ENCODE measurements at regions of chr9 and their contacts with region 1.

Region 1: GRCh38 chr9:124239249-124240073 is 18.3 kb upstream of the NEK6 start:
- DNase-seq: peak; percentile 32
- H3K4me3 ChIP-seq: no peak overlapping the region
- H3K27ac ChIP-seq: no peak overlapping the region
- H3K4me1 ChIP-seq: peaks cover 3% of the 10 kb centered on the region
- H3K27me3 ChIP-seq: no peaks in the 10 kb centered on the region
- CTCF ChIP-seq: no peak
- POLR2A ChIP-seq: no peak

Region 2: GRCh38 chr9:124110307-124110915 is 129.1 kb before region 1 on chr9:
- intact Hi-C with region 1: loop called (anchors 10 kb)
- DNase-seq: peak; percentile 83
- H3K4me3 ChIP-seq: no peak overlapping the region
- H3K27ac ChIP-seq: no peak overlapping the region
- H3K4me1 ChIP-seq: no peaks in the 10 kb centered on the region
- H3K27me3 ChIP-seq: no peaks in the 10 kb centered on the region
- CTCF ChIP-seq: no peak
- POLR2A ChIP-seq: no peak

Region 3: DNA sequence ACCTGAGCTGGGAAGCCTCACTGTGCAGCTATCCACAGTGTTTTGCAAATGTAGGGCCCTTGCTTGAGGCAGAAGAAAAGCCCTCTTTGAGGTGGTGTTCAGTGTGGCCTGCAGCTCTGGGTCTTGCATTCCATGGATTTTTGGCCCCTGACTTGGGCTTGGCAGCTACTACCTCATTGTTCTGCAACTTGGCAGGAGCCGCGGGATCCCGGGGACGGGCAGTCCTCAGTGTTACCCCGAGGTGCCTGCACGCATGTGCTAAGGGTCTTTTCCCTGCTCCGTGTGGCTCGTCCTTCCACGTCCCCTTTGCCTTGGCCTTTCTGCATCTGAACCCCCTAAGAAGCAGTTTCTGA is 58.1 kb after region 1 on chr9:
- intact Hi-C with region 1: no loop called
- DNase-seq: peak; percentile 85
- H3K4me3 ChIP-seq: no peak overlapping the region
- H3K27ac ChIP-seq: no peak overlapping the region
- H3K4me1 ChIP-seq: peaks cover 36% of the 10 kb centered on the region
- H3K27me3 ChIP-seq: no peaks in the 10 kb centered on the region
- CTCF ChIP-seq: no peak
- POLR2A ChIP-seq: no peak

Region 4: DNA sequence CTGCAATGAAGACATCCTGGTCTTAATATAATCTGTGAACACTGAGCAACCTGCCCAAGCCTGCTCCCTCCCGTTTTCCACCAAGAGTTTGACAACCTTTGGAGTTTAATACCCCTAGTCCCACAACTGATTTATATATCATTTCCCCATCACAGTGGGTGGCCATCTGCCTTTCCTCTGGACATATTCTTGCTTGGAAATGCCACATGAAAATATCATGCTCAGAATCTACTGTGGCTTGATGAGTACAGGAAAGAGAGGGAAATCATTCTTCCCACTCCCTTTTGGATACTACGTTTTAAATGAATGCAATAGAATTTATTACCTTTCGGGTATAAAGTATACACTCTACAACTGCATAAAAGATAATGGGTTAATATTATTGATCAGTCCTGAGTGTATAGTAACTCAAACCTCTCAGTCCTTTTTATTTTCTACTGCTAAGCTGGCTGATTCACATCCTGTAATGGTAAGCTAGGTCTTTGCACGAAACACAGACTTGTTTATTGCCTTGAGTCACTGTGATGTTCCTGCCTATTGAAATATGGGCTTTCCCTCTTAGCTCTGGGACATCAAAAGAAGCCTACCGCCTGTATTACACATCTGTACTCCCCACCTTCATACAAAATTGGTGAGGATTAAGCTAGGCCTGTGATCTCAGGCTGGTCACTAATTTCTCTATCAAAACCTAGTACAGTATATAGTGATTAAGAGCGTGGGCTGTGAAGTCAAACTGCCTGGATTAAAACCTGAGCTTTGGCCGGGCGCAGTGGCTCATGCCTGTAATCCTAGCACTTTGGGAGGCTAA is 335.3 kb after region 1 on chr9:
- intact Hi-C with region 1: no loop called
- DNase-seq: no peak
- H3K4me3 ChIP-seq: no peak overlapping the region
- H3K27ac ChIP-seq: no peak overlapping the region
- H3K4me1 ChIP-seq: no peaks in the 10 kb centered on the region
- H3K27me3 ChIP-seq: no peaks in the 10 kb centered on the region
- CTCF ChIP-seq: no peak
- POLR2A ChIP-seq: no peak

Region 5: GRCh38 chr9:124593651-124594058 is 354.2 kb after region 1 on chr9:
- intact Hi-C with region 1: no loop called
- DNase-seq: no peak
- H3K4me3 ChIP-seq: no peak overlapping the region
- H3K27ac ChIP-seq: no peak overlapping the region
- H3K4me1 ChIP-seq: peaks cover 5% of the 10 kb centered on the region
- H3K27me3 ChIP-seq: no peaks in the 10 kb centered on the region
- CTCF ChIP-seq: no peak
- POLR2A ChIP-seq: no peak

Measured in testis (tissue), 5 donors.